Lower lobe of right lung (tissue), 2 donors: ENCODE measurements at regions of chr1 and their contacts with region 1.

Region 1: GRCh38 chr1:212070720-212071302 is 35.3 kb downstream of the DTL start:
- DNase-seq: no peak
- ATAC-seq: peak; percentile 77 to 92
- H3K4me3 ChIP-seq: no peak overlapping the region
- H3K27ac ChIP-seq: no peak overlapping the region
- H3K4me1 ChIP-seq: peaks cover 19% of the 10 kb centered on the region
- H3K27me3 ChIP-seq: no peaks in the 10 kb centered on the region
- CTCF ChIP-seq: peak; percentile 81

Region 2: DNA sequence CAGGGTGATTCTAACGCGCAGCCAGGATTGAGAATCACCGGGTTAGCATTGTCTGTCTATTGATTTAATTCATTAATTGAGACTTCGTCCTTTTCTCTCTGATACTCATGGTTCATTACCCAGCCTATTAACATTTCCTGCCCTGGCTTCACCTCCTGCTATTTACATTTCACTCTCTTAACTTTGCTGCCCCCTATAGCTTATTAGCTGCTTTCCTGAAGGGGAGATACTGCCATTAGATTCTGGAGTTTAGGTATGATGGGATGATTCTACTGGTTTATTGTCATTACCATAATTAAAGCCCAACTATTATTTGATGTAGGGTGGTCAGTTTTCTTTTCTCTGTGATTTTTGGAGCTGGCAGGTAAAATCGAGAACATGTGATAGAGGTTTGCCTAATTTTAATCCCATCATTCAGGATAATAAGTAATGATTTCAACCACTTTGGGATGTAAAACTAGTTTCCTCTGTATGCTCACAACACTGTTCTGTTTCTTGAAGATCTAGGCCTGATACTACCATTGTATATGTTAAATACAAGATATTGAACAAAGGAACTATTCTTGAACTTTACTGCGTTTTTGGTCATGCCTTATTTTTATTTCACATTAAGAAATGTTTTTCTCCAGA is 220.8 kb after region 1 on chr1:
- intact Hi-C with region 1: loop called (anchors 5 kb)
- DNase-seq: no peak
- ATAC-seq: peak; percentile 62 to 81
- H3K4me3 ChIP-seq: peak overlapping the region; percentile 91
- H3K27ac ChIP-seq: no peak overlapping the region
- H3K4me1 ChIP-seq: peaks cover 74% of the 10 kb centered on the region
- H3K27me3 ChIP-seq: no peaks in the 10 kb centered on the region
- CTCF ChIP-seq: peak; percentile 64